ENCODE measurements at regions of chr6 and their contacts with region 1.

Region 1: DNA sequence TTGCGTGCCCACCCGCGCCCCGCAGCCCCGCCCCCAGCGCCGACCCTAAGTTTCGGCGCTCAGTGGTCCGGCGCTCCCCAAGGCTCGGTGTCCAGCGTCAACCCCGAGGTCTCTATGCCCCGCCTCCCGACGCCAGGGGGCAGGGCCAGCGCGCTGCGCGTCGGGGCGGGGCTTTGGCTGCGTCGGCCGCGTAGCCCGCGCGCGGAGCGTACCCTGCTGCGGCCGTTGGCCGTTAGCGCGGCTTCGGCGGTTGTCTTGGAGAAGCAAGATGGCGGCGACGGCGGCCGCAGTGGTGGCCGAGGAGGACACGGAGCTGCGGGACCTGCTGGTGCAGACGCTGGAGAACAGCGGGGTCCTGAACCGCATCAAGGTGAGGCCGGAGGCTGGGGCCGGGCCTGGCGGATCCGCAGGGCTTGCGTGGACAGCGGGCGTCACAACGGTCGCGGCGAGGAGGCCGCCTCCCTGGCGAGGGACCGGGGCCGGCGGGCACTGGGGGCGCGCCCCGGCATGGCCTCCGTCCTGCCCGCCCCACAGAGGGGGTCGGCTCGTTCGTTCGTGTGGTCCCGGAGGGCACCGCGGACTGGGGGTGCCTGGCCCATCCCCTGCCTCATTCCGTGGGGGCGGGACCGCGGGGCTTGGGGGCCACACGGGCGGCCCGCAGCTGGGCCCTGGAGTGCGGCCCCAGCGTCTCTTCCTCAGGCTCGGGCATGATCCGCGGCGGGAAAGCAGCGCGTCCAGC is at the start of gene CEP43:
- DNase-seq: peak; percentile 94
- ATAC-seq: peak; percentile 94
- H3K4me3 Mint-ChIP-seq: peak within 1 kb of the TSS; percentile 94
- H3K27ac Mint-ChIP-seq: peak within 1 kb of the TSS; percentile 91
- H3K4me1 Mint-ChIP-seq: peaks cover 40% of the 10 kb centered on the region
- H3K27me3 Mint-ChIP-seq: no peaks in the 10 kb centered on the region
- total RNA-seq, gene CEP43: 25.6 to 28.1 TPM

Region 2: DNA sequence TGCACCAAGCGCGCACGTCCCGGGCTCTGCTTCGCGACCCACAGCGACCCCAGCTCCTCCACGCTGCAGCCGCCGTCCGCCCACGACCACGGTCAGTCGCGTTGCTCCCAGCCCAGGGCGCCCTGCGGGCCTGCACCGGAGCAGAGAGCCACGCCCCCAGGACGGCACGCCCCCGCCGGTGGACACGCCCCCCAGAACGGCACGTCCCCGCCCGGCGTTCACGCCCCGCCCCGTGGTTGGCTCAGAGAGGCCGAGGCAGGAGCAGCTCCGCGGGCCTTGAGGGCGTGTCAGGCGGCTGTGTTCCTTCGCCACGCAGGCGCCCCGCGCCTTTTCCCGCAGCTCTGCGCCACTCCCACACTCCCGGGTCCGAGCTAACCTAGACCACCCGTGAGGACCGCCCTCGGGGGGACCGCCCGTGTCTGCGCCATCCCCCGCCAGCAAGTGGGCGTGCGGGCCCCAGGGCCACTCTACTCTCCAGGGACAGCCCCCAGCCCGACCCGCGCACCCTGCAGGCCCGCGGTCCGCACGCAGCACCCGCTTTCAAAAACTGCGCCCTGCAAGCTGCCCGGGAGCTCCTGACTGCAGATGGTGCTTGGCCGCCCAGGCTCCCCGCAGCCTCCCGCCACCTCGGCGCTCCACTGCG is 42.7 kb before region 1 on chr6 and contains the start of gene RNASET2:
- CTCF ChIA-PET with region 1: interaction called, 5 read pairs
- POLR2A ChIA-PET with region 1: interaction called, 18 read pairs
- DNase-seq: peak; percentile 98
- ATAC-seq: peak; percentile 85
- H3K4me3 Mint-ChIP-seq: peak within 1 kb of the TSS; percentile 82
- H3K27ac Mint-ChIP-seq: peak within 1 kb of the TSS; percentile 95
- H3K4me1 Mint-ChIP-seq: peaks cover 71% of the 10 kb centered on the region
- H3K27me3 Mint-ChIP-seq: no peaks in the 10 kb centered on the region
- total RNA-seq, gene RNASET2: 46.9 to 48.7 TPM

Region 3: DNA sequence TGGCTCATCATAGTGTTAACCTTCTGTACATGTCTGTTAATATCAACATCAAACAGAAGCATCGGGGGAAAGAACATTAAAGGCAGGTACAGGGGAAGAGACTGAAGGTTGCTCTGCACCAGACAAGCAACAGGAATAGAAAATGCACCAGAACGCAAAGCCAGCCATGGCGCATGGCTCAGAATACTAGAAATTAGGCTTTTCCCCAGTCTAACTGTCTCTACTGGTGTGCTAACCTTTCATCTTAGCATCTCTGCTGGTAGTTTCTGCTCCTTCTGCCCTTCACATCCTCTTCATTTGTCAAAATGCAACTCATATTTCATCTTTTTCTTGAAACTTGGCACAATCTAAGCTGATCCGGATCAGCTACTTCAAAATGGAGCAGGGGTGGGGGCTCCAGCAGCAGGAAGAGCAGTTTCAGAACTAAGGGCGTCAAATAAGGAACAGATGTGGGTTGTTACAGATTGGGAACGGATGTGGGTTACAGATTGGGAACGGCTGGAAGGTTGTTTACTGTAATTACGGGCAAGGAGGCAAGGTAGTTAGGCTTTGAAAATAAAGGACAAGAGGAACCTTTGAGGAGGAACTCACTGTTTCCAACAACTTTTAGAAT is 29.8 kb before region 1 on chr6:
- CTCF ChIA-PET with region 1: no interaction called
- POLR2A ChIA-PET with region 1: no interaction called
- DNase-seq: no peak
- ATAC-seq: no peak
- H3K4me3 Mint-ChIP-seq: no peak overlapping the region
- H3K27ac Mint-ChIP-seq: peak overlapping the region; percentile 23
- H3K4me1 Mint-ChIP-seq: peaks cover 20% of the 10 kb centered on the region
- H3K27me3 Mint-ChIP-seq: no peaks in the 10 kb centered on the region

Measured in activated CD8-positive, alpha-beta T cell treated with anti-CD3 and anti-CD28 coated beads, Interleukin-2, amount 10 ng/mL, durations not matched to agents 7 days and 5 days (primary cell).